OCI-LY7 (cell line): ENCODE measurements at regions of chr6 and their contacts with region 1.

Region 1: DNA sequence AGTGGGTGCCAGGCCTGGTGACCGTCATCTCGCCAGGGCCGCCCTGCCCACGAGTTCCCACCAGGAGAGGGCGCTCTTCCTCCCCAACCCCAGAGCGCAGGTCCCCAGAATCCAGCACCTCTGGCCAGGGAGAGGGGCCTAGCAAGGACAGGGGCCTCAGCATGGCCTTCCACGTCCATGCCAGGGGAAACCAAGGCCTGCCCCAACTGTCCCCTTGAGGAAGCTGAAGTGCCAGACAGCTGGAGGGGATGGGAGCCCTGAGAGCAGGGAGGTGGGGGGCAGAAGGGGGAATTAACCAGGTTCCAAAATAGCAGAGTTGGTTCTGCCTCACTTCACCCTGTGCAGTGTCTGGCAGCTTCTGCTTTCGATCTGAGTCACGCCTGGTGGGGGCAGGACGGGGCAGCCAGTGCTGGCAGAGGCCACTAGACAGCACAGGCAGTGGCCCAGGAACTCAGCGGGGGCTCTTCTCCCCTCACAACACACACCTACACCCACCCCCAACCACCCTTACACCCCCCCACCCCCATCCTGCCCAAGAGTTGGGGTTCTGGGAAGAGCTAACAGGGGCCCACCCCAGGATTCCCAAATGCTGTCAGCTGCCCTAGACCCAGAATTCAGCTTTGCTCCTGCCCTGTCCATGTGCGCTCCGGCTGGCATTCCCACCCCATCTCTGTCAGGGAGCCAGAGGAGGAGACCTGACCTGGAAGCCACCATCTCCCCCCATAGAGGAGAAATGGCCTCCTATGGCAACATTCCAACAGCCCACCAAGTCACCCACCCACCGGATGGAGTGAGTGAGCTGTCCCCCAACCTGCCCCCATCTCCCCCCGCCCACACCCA is 29.2 kb downstream of the TFEB start:
- DNase-seq: peak; percentile 94
- H3K4me3 ChIP-seq: peak overlapping the region; percentile 69
- H3K27ac ChIP-seq: peak overlapping the region; percentile 90
- H3K4me1 ChIP-seq: peaks cover 74% of the 10 kb centered on the region
- CTCF ChIP-seq: peak; percentile 96

Region 2: GRCh38 chr6:41545703-41546474 is 160.3 kb before region 1 on chr6 and contains the start of gene FOXP4:
- CTCF ChIA-PET with region 1: no interaction called
- POLR2A ChIA-PET with region 1: no interaction called
- intact Hi-C with region 1: no loop called
- DNase-seq: peak; percentile 94
- H3K4me3 ChIP-seq: peak within 1 kb of the TSS; percentile 94
- H3K27ac ChIP-seq: peak within 1 kb of the TSS; percentile 61
- H3K4me1 ChIP-seq: peaks cover 28% of the 10 kb centered on the region
- CTCF ChIP-seq: no peak
- total RNA-seq, gene FOXP4: 5.1 and 6.3 TPM in 2 replicates

Region 3: GRCh38 chr6:41675176-41675770 is 30.9 kb before region 1 on chr6:
- CTCF ChIA-PET with region 1: no interaction called
- POLR2A ChIA-PET with region 1: no interaction called
- intact Hi-C with region 1: no loop called
- DNase-seq: no peak
- H3K4me3 ChIP-seq: no peak overlapping the region
- H3K27ac ChIP-seq: no peak overlapping the region
- H3K4me1 ChIP-seq: no peaks in the 10 kb centered on the region
- CTCF ChIP-seq: no peak

Region 4: DNA sequence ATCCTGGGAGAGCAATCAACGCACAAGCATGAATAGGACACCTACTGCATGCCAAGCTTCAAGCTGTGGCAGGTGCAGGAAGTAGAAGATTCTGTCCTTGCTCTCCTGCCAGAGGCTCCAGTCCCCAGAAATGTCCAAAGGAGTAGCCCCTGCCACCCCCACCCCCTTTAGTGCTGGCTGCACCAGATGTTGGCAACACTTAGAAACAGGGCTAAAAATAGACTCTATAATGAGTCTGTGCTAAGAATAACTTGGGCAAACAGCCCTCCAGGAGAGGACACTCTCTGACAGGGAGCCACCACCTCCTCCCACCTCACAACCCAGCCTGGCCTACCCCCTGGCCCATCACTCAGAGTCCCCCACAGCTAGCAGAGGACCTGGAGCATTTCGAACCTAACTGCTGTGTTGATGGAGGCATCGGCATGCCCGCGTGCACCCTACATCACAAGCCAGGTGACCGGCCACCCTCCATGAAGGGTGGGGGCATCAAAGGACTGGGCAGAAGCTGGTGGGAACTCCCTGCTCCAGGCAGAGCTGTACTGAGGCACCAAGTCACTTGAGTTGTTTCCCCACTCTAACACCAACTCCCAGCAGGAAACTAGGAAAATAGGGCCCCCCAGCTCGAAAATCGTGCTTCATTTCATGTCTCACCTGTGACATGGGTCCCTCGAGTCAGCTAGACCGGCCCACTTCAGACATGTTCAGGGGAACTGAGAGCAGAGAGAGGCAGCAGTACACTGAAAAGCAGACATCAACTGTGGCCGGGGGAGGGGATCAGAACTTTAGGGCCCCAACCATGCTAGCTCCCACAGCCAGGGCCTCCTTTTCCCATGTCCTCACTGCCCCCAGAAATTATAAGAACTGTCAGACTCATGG is 10.5 kb after region 1 on chr6:
- CTCF ChIA-PET with region 1: interaction called, 33 read pairs
- POLR2A ChIA-PET with region 1: interaction called, 65 read pairs
- intact Hi-C with region 1: no loop called
- DNase-seq: peak; percentile 41
- H3K4me3 ChIP-seq: peak overlapping the region; percentile 29
- H3K27ac ChIP-seq: peak overlapping the region; percentile 63
- H3K4me1 ChIP-seq: peaks cover 81% of the 10 kb centered on the region
- CTCF ChIP-seq: no peak

Region 5: GRCh38 chr6:41723530-41724227 is 17.5 kb after region 1 on chr6:
- CTCF ChIA-PET with region 1: interaction called, 9 read pairs
- POLR2A ChIA-PET with region 1: interaction called, 118 read pairs
- intact Hi-C with region 1: loop called (anchors 1 kb)
- DNase-seq: peak; percentile 94
- H3K4me3 ChIP-seq: peak overlapping the region; percentile 67
- H3K27ac ChIP-seq: peak overlapping the region; percentile 93
- H3K4me1 ChIP-seq: peaks cover 98% of the 10 kb centered on the region
- CTCF ChIP-seq: 0 out of 2 replicates have a peak, but pooled peaks have one; percentile 21